ENCODE measurements at regions of chr2 and their contacts with region 1.

Region 1: DNA sequence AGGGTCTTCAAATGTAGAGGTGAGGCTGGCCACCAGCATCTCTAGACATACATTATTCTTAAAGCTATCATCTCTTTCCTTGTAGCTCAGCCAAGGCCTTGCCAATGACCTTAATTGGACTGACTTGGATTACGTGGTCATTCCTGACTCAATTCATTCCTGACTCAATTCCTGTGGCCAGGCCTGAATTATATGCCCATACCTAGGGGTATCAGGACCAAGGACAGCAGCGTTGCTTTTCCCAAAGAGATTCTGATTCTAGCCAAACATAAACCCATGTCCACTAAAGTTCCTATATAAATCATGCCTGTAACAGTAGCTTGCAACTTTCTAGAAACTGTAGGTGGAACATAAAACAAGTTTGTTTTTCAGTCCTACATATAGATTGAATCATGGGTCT is 231.7 kb downstream of the ARL6IP6 start:
- DNase-seq: no peak
- ATAC-seq: no peak
- H3K4me3 ChIP-seq: no peak overlapping the region
- H3K4me3 Mint-ChIP-seq: no peak overlapping the region
- H3K27ac ChIP-seq: no peak overlapping the region
- H3K27ac Mint-ChIP-seq: no peak overlapping the region
- H3K4me1 ChIP-seq: no peaks in the 10 kb centered on the region
- H3K4me1 Mint-ChIP-seq: no peaks in the 10 kb centered on the region
- H3K27me3 ChIP-seq: no peaks in the 10 kb centered on the region
- H3K27me3 Mint-ChIP-seq: peaks cover 0 to 3% of the 10 kb centered on the region in 2 donors

Region 2: GRCh38 chr2:152189622-152190495 is 760.3 kb before region 1 on chr2:
- CTCF ChIA-PET with region 1: no interaction called
- POLR2A ChIA-PET with region 1: no interaction called
- DNase-seq: peak in 1 of 35 experiments; percentile 26
- ATAC-seq: no peak
- H3K4me3 ChIP-seq: no peak overlapping the region
- H3K4me3 Mint-ChIP-seq: no peak overlapping the region
- H3K27ac ChIP-seq: no peak overlapping the region
- H3K27ac Mint-ChIP-seq: no peak overlapping the region
- H3K4me1 ChIP-seq: no peaks in the 10 kb centered on the region
- H3K4me1 Mint-ChIP-seq: peaks cover 0 to 5% (median 0%) of the 10 kb centered on the region in 3 donors
- H3K27me3 ChIP-seq: peaks cover 0 to 12% of the 10 kb centered on the region in 2 experiments
- H3K27me3 Mint-ChIP-seq: peaks cover 23 to 25% of the 10 kb centered on the region in 2 donors

Region 3: GRCh38 chr2:152387041-152387440 is 563.1 kb before region 1 on chr2:
- CTCF ChIA-PET with region 1: no interaction called
- POLR2A ChIA-PET with region 1: interaction called in 1 of 2 experiments, 14 read pairs
- DNase-seq: no peak
- ATAC-seq: no peak
- H3K4me3 ChIP-seq: no peak overlapping the region
- H3K4me3 Mint-ChIP-seq: no peak overlapping the region
- H3K27ac ChIP-seq: no peak overlapping the region
- H3K27ac Mint-ChIP-seq: no peak overlapping the region
- H3K4me1 ChIP-seq: no peaks in the 10 kb centered on the region
- H3K4me1 Mint-ChIP-seq: no peaks in the 10 kb centered on the region
- H3K27me3 ChIP-seq: no peaks in the 10 kb centered on the region
- H3K27me3 Mint-ChIP-seq: peaks cover 0 to 2% of the 10 kb centered on the region in 2 donors

Region 4: DNA sequence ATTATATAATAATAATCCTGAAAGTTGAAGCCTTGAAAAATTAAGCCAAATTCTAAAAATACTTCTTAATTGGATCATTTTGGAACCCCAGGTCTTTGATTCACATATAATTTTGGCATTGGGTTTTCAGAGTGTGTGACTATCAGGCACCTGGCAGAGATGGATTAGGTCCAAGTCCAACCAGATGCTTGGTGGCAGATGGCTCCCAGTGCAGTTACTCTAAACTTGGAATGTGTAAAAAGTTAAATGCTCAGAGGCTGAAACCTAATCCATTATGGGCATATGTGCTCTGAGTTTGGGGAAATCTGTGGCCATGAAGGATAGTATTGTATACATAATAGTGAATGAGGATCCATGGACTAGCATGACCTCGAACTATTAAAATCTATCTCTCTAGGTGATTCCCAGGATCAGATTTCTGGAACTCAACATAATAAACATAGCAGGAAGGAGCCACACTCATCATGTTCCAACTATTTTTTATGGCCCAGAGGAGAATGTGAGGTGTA is 195.4 kb after region 1 on chr2:
- CTCF ChIA-PET with region 1: no interaction called
- POLR2A ChIA-PET with region 1: no interaction called
- DNase-seq: no peak
- ATAC-seq: no peak
- H3K4me3 ChIP-seq: no peak overlapping the region
- H3K4me3 Mint-ChIP-seq: no peak overlapping the region
- H3K27ac ChIP-seq: no peak overlapping the region
- H3K27ac Mint-ChIP-seq: no peak overlapping the region
- H3K4me1 ChIP-seq: no peaks in the 10 kb centered on the region
- H3K4me1 Mint-ChIP-seq: no peaks in the 10 kb centered on the region
- H3K27me3 ChIP-seq: no peaks in the 10 kb centered on the region
- H3K27me3 Mint-ChIP-seq: no peaks in the 10 kb centered on the region